CD4-positive, alpha-beta memory T cell (primary cell): ENCODE measurements at regions of chr15 and their contacts with region 1.

Region 1: GRCh38 chr15:42084460-42085235 is 9.7 kb downstream of the PLA2G4D start:
- DNase-seq: peak in 4 of 5 donors; percentile 19 to 34 (median 22)
- H3K4me3 ChIP-seq: no peak overlapping the region
- H3K4me3 Mint-ChIP-seq: peak overlapping the region in 3 of 8 donors; percentile 33 to 38 (median 36)
- H3K27ac ChIP-seq: no peak overlapping the region
- H3K27ac Mint-ChIP-seq: peak overlapping the region in 2 of 7 donors; percentile 9 to 41
- H3K4me1 ChIP-seq: peaks cover 10% of the 10 kb centered on the region
- H3K4me1 Mint-ChIP-seq: peaks cover 0 to 10% (median 2%) of the 10 kb centered on the region in 4 donors
- H3K27me3 ChIP-seq: no peaks in the 10 kb centered on the region
- H3K27me3 Mint-ChIP-seq: peaks cover 6% of the 10 kb centered on the region in 2 donors

Region 2: GRCh38 chr15:41989259-41989933 is 95.3 kb before region 1 on chr15:
- CTCF ChIA-PET with region 1: interaction called, 33 read pairs
- POLR2A ChIA-PET with region 1: no interaction called
- intact Hi-C with region 1: loop called (anchors 1 kb)
- DNase-seq: peak; percentile 70 to 78 (median 72)
- H3K4me3 ChIP-seq: no peak overlapping the region
- H3K4me3 Mint-ChIP-seq: no peak overlapping the region
- H3K27ac ChIP-seq: no peak overlapping the region
- H3K27ac Mint-ChIP-seq: peak overlapping the region in 1 of 7 donors; percentile 52
- H3K4me1 ChIP-seq: no peaks in the 10 kb centered on the region
- H3K4me1 Mint-ChIP-seq: no peaks in the 10 kb centered on the region
- H3K27me3 ChIP-seq: no peaks in the 10 kb centered on the region
- H3K27me3 Mint-ChIP-seq: no peaks in the 10 kb centered on the region

Region 3: GRCh38 chr15:42035435-42035761 is 49.2 kb before region 1 on chr15:
- CTCF ChIA-PET with region 1: no interaction called
- POLR2A ChIA-PET with region 1: no interaction called
- intact Hi-C with region 1: no loop called
- DNase-seq: no peak
- H3K4me3 ChIP-seq: no peak overlapping the region
- H3K4me3 Mint-ChIP-seq: peak overlapping the region in 1 of 8 donors; percentile 58
- H3K27ac ChIP-seq: no peak overlapping the region
- H3K27ac Mint-ChIP-seq: peak overlapping the region in 4 of 7 donors; percentile 8 to 88 (median 60)
- H3K4me1 ChIP-seq: peaks cover 12% of the 10 kb centered on the region
- H3K4me1 Mint-ChIP-seq: peaks cover 5 to 17% (median 9%) of the 10 kb centered on the region in 4 donors
- H3K27me3 ChIP-seq: no peaks in the 10 kb centered on the region
- H3K27me3 Mint-ChIP-seq: peaks cover 0 to 2% of the 10 kb centered on the region in 2 donors

Region 4: GRCh38 chr15:42063122-42063848 is 21.4 kb before region 1 on chr15:
- CTCF ChIA-PET with region 1: interaction called, 10 read pairs
- POLR2A ChIA-PET with region 1: no interaction called
- intact Hi-C with region 1: no loop called
- DNase-seq: no peak
- H3K4me3 ChIP-seq: no peak overlapping the region
- H3K4me3 Mint-ChIP-seq: no peak overlapping the region
- H3K27ac ChIP-seq: no peak overlapping the region
- H3K27ac Mint-ChIP-seq: no peak overlapping the region
- H3K4me1 ChIP-seq: peaks cover 6% of the 10 kb centered on the region
- H3K4me1 Mint-ChIP-seq: peaks cover 0 to 11% (median 4%) of the 10 kb centered on the region in 4 donors
- H3K27me3 ChIP-seq: no peaks in the 10 kb centered on the region
- H3K27me3 Mint-ChIP-seq: peaks cover 4 to 16% of the 10 kb centered on the region in 2 donors

Region 5: DNA sequence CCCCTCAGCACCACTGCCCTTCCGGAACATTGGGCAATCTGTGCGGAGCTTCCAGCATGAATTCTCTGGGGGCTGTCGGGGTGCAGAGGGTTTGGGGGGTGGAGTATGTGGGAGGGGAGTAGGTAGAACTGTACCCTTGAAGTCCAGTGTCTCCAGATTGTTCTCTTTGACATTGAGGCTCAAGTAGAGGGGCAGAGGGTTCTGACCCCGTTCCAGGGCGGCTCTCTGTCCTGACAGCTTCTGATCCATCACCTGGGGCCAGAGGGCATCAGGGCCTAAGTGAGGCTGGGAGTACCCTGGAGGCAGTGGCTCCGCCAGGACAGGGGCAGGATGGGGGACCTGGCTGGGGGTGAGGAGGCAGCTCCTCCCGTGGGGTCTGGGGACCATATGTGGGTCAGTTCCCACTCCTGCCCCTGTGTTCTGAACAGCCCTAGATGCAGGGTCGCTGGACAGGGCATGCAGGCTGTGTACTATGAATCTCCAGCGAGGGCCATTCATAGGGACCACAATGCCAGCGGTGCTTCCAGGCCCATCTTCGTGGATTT is 12.4 kb before region 1 on chr15:
- CTCF ChIA-PET with region 1: interaction called, 15 read pairs
- POLR2A ChIA-PET with region 1: no interaction called
- intact Hi-C with region 1: no loop called
- DNase-seq: no peak
- H3K4me3 ChIP-seq: no peak overlapping the region
- H3K4me3 Mint-ChIP-seq: no peak overlapping the region
- H3K27ac ChIP-seq: no peak overlapping the region
- H3K27ac Mint-ChIP-seq: no peak overlapping the region
- H3K4me1 ChIP-seq: no peaks in the 10 kb centered on the region
- H3K4me1 Mint-ChIP-seq: no peaks in the 10 kb centered on the region
- H3K27me3 ChIP-seq: no peaks in the 10 kb centered on the region
- H3K27me3 Mint-ChIP-seq: peaks cover 3 to 7% of the 10 kb centered on the region in 2 donors